ENCODE measurements at regions of chr14 and their contacts with region 1.

Region 1: DNA sequence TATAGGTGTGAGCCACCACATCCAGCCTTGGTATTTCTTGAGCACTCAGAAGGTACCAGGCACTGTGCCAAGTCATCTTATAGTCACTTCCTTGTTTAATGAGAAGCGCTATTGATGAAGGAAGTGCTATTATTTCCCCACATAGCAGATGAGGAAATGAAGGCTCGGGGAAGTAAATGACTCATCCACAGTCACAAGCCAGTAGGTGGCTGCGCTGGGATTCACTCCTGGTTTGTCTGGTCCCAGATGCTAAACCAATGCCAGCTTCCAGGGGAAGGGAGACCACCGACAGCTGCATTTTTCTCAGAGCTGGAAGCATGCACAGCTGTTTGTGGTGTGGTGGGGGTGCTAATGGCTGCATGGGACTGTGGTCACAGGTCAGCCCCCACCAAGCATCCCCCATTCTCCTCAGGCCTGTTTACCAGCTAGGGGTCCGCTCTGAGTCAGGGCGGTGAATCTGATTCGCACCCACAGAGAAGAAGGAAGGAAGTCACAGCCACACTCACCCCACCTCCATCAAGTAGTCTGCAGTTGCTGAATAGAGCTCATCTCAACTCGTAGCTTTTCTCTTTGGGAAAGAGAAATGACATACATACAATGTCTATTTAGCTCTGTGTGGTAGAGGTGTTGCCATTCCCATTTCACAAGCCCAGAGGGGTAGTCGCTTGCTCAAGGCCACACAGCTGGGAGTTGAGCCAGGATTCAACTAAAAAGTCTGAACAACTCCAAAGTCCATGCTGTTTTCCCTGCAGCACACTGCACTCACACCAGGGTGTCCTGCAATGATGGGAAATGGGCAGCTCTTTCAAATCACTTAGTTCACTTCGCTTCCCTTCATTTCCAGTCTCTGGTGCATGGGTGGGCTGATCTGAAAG is 6.3 kb upstream of the LTBP2 start:
- DNase-seq: peak; percentile 83
- H3K4me3 Mint-ChIP-seq: peak overlapping the region; percentile 39
- H3K27ac Mint-ChIP-seq: peak overlapping the region; percentile 75
- H3K4me1 Mint-ChIP-seq: peaks cover 71% of the 10 kb centered on the region
- H3K27me3 Mint-ChIP-seq: peaks cover 67% of the 10 kb centered on the region

Region 2: GRCh38 chr14:74459289-74459946 is 158.9 kb before region 1 on chr14:
- CTCF ChIA-PET with region 1: no interaction called
- POLR2A ChIA-PET with region 1: no interaction called
- DNase-seq: peak; percentile 22
- H3K4me3 Mint-ChIP-seq: no peak overlapping the region
- H3K27ac Mint-ChIP-seq: no peak overlapping the region
- H3K4me1 Mint-ChIP-seq: no peaks in the 10 kb centered on the region
- H3K27me3 Mint-ChIP-seq: peaks cover 9% of the 10 kb centered on the region

Region 3: DNA sequence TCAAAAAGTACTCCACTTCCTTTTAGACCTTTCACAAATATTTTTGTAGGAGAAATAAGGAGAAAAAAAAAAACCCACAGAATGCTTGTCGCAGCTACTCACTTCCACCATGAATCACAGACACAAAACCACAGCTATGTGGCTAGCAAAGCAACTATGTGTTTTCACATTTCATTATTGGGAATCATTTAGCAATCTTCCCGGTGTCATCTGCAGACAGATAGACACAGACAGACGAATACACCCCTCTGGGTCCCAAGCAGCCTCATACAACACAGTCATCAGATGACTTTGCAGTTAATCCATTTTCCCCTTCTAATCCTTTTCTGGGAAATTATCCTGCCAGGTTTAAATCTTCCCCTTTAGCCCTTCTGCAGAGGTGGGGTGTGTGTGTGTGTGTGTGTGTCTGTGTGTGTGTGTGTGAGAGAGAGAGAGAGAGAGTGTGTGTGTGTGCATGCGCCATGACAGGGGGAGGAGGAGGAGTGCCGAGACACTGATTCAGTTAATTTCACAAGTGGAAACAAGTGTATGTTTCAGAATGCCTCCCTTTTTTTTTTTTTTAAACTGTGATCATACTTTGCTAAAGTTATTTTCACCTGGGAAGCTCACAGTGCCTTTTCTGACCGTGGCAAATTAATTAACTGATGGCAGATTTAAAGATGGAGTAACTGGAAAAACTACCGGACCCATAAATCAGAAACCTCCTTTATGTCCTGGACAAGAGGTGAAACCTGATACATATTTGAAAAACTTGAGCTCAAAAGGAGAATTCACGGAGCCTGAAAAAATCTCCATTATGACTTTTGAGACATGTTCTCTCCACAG is 46.2 kb before region 1 on chr14:
- CTCF ChIA-PET with region 1: interaction called, 29 read pairs
- POLR2A ChIA-PET with region 1: interaction called, 19 read pairs
- DNase-seq: no peak
- H3K4me3 Mint-ChIP-seq: no peak overlapping the region
- H3K27ac Mint-ChIP-seq: no peak overlapping the region
- H3K4me1 Mint-ChIP-seq: peaks cover 41% of the 10 kb centered on the region
- H3K27me3 Mint-ChIP-seq: peaks cover 52% of the 10 kb centered on the region

Region 4: DNA sequence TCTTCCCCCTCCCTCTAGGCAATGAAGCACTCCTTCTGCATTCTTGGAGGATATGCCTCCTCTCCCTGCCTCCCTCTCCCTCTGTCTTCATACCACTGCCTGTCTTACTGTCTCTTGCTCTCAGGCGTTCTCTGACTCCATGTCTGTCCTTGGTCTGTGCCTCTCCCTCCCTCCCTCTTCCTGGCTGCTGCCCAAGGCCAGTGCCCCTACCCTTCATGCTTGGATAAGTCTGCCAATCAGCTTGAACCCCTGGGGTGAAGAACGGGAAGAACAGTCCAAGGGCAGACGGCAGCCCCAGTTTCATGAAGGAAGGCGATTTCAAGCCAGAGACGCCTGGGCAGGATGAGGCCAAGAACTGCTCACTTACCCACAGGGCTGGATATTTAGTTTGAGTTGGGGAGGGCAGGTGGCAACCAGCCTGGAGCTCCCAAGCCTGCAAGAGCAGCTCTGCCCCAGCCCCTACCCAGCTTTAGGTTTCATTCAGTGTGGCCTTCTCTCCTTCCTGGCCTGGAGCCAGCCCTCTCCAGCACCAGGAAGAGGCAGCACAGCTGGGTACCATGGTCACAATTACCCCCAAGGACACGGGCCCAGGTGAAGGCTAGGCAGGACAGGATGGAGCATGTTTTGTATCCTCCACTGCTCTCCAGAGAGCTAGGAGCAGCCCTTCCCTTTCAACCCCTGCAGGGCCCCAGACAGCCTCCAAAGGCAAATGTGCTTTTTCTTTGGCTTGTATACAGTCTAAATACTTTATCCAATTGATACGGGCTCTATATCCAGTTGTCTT is 29.6 kb after region 1 on chr14:
- CTCF ChIA-PET with region 1: interaction called, 3 read pairs
- POLR2A ChIA-PET with region 1: interaction called, 12 read pairs
- DNase-seq: no peak
- H3K4me3 Mint-ChIP-seq: no peak overlapping the region
- H3K27ac Mint-ChIP-seq: no peak overlapping the region
- H3K4me1 Mint-ChIP-seq: peaks cover 10% of the 10 kb centered on the region
- H3K27me3 Mint-ChIP-seq: peaks cover 4% of the 10 kb centered on the region

Region 5: DNA sequence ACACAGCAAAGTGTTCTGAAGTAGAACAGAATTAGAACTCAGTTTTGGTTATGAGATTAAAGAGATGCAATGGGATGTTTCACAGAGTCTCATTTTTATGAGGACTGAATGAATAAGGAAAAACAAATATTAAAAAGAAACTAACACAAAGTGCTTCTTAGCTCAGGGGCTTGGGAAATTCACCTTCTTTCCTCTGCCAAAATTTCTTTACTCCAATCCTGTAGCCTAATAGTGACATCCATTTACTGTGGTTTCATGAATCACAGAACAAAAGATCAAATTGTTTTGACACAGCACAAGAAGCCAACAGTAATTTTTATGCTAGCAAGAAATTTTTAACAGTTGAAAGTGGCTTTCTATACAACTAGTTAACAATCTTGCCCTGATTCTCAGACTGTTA is 56.9 kb after region 1 on chr14:
- CTCF ChIA-PET with region 1: no interaction called
- POLR2A ChIA-PET with region 1: no interaction called
- DNase-seq: no peak
- H3K4me3 Mint-ChIP-seq: no peak overlapping the region
- H3K27ac Mint-ChIP-seq: no peak overlapping the region
- H3K4me1 Mint-ChIP-seq: no peaks in the 10 kb centered on the region
- H3K27me3 Mint-ChIP-seq: no peaks in the 10 kb centered on the region

Region 6: GRCh38 chr14:74860906-74861733 is 242.8 kb after region 1 on chr14:
- CTCF ChIA-PET with region 1: no interaction called
- POLR2A ChIA-PET with region 1: no interaction called
- DNase-seq: peak; percentile 91
- H3K4me3 Mint-ChIP-seq: no peak overlapping the region
- H3K27ac Mint-ChIP-seq: no peak overlapping the region
- H3K4me1 Mint-ChIP-seq: peaks cover under 1% of the 10 kb centered on the region
- H3K27me3 Mint-ChIP-seq: no peaks in the 10 kb centered on the region